Activated B cell treated with CpG ODN at 0.5 μM for 24 hours (primary cell): ENCODE measurements at regions of chr17 and their contacts with region 1.

Region 1: DNA sequence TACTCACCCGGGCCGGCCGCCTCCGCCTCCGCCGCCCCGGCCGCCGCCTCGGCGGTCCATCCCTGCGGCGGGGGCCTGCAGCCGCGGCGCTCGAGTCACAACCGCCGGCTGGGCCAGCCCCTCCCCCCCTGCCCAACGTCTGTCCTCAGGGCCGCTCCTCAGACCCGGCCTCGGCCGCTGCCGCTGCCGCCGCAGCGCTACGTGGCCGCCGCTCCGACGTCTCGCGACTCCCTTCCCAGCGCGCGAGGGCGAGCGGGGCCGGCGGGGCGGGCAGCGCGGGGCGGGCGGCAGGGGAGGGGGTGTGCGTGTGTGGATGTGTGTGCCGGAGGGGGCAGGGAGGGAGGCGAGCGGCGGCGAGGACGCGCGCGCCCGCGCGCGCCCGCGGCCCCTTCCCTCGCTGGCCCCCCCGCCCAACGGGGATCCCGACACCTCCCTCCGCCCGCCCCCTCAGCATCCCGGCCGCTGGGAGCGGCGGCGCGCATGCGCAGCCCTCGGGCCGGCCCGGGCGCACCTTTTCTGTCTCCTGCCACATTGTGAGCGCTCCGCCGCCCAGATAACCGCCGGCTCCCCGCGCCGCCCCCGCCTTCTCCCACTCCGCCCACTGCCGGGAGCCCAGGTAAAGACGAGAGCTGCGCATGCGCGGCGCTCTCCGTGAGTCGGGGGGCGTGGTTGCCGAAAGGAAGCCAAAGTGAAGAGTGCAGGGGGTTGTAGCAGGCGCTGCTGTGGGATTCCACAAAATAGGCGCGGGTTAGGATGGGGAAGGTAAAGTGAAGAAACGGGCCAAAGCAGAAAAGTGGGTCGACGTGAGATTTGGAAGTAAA is at the start of gene ZNF652:
- DNase-seq: peak; percentile 95
- ATAC-seq: peak; percentile 69
- H3K4me3 Mint-ChIP-seq: peak within 1 kb of the TSS; percentile 96
- H3K27ac Mint-ChIP-seq: peak within 1 kb of the TSS; percentile 96
- H3K4me1 Mint-ChIP-seq: peaks cover 61% of the 10 kb centered on the region
- H3K27me3 Mint-ChIP-seq: no peaks in the 10 kb centered on the region
- CTCF ChIP-seq: no peak
- total RNA-seq, gene ZNF652: 37.1 and 40.6 TPM in 2 replicates

Region 2: DNA sequence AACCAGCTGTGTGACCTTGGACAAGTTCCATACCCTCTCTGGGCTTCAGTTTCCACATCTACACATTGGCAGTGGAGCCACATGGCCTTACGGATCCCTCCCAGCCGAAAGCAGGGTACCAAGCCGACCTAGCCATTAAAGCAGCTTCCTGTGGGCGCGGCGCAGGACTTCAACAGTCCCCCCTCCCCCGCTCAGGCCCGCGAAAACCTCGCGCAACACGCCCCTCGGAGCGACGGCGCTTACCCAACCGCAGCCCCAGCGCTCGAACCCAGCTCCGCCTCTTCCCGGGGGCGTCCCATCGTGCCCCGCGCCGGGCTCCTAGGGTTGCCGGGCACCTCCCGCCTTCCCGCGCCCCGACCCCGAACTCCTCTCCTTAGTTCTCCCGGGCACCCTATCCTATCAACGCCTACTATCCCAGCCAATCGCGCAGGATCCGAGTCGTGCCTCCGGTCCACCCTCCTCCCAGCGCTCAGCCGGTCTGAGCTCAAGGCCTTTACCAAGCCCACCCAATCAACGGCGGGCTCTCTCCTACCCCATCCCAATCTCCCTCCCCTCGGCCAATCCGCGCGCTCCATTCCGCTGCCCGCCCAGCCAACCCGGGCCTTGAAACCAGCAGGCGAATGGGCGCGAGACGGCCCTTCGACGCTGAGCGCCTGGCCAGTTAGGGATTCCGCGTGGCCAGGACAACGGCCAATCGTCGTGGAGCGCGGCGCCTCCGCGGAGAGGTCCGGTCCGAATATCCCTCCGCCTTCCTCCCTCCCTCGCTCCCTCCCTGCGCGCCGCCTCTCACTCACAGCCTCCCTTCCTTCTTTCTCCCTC is 1712.8 kb before region 1 on chr17 and contains the start of gene KPNB1:
- CTCF ChIA-PET with region 1: no interaction called
- POLR2A ChIA-PET with region 1: no interaction called
- intact Hi-C with region 1: loop called (anchors 5 kb)
- DNase-seq: peak; percentile 92
- ATAC-seq: peak; percentile 80
- H3K4me3 Mint-ChIP-seq: peak within 1 kb of the TSS; percentile 99
- H3K27ac Mint-ChIP-seq: peak within 1 kb of the TSS; percentile 99
- H3K4me1 Mint-ChIP-seq: peaks cover 53% of the 10 kb centered on the region
- H3K27me3 Mint-ChIP-seq: no peaks in the 10 kb centered on the region
- CTCF ChIP-seq: no peak
- total RNA-seq, gene KPNB1: 361 and 365 TPM in 2 replicates

Region 3: DNA sequence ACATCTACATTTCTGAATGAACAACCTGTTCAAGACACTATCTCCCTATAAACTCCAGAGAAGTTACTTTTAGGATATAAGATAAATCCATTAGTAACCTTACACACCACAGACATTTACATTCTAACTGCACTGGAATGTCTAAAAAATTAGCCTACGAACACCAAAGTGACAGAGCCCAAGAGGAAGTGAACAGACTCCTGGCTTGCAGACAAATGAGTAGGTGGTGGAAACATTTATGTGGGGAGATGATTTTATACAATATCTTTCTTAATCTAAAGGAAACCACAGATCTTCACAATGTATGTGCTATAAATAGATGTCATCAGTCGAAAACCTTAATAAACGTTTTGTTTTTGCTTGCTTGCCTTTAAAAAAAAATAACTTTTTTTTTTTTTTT is 18.8 kb before region 1 on chr17:
- CTCF ChIA-PET with region 1: interaction called, 6 read pairs
- POLR2A ChIA-PET with region 1: interaction called, 85 read pairs
- intact Hi-C with region 1: loop called (anchors 1 kb)
- DNase-seq: no peak
- ATAC-seq: peak; percentile 30
- H3K4me3 Mint-ChIP-seq: peak overlapping the region; percentile 72
- H3K27ac Mint-ChIP-seq: peak overlapping the region; percentile 89
- H3K4me1 Mint-ChIP-seq: peaks cover 65% of the 10 kb centered on the region
- H3K27me3 Mint-ChIP-seq: no peaks in the 10 kb centered on the region
- CTCF ChIP-seq: no peak

Region 4: GRCh38 chr17:49390548-49391324 is 28.6 kb after region 1 on chr17:
- CTCF ChIA-PET with region 1: interaction called, 7 read pairs
- POLR2A ChIA-PET with region 1: interaction called, 109 read pairs
- intact Hi-C with region 1: loop called (anchors 1 kb)
- DNase-seq: peak; percentile 29
- ATAC-seq: peak; percentile 51
- H3K4me3 Mint-ChIP-seq: peak overlapping the region; percentile 77
- H3K27ac Mint-ChIP-seq: peak overlapping the region; percentile 98
- H3K4me1 Mint-ChIP-seq: peaks cover 77% of the 10 kb centered on the region
- H3K27me3 Mint-ChIP-seq: no peaks in the 10 kb centered on the region
- CTCF ChIP-seq: no peak

Region 5: GRCh38 chr17:49414622-49415350 is 52.7 kb after region 1 on chr17 and contains the start of gene PHB1:
- CTCF ChIA-PET with region 1: no interaction called
- POLR2A ChIA-PET with region 1: interaction called, 4 read pairs
- intact Hi-C with region 1: loop called (anchors 1 kb)
- DNase-seq: peak; percentile 78
- ATAC-seq: peak; percentile 98
- H3K4me3 Mint-ChIP-seq: peak within 1 kb of the TSS; percentile 100
- H3K27ac Mint-ChIP-seq: peak within 1 kb of the TSS; percentile 89
- H3K4me1 Mint-ChIP-seq: peaks cover 24% of the 10 kb centered on the region
- H3K27me3 Mint-ChIP-seq: no peaks in the 10 kb centered on the region
- CTCF ChIP-seq: no peak
- total RNA-seq, gene PHB1: 184 and 214 TPM in 2 replicates